ENCODE measurements at regions of chr22 and their contacts with region 1.

Region 1: DNA sequence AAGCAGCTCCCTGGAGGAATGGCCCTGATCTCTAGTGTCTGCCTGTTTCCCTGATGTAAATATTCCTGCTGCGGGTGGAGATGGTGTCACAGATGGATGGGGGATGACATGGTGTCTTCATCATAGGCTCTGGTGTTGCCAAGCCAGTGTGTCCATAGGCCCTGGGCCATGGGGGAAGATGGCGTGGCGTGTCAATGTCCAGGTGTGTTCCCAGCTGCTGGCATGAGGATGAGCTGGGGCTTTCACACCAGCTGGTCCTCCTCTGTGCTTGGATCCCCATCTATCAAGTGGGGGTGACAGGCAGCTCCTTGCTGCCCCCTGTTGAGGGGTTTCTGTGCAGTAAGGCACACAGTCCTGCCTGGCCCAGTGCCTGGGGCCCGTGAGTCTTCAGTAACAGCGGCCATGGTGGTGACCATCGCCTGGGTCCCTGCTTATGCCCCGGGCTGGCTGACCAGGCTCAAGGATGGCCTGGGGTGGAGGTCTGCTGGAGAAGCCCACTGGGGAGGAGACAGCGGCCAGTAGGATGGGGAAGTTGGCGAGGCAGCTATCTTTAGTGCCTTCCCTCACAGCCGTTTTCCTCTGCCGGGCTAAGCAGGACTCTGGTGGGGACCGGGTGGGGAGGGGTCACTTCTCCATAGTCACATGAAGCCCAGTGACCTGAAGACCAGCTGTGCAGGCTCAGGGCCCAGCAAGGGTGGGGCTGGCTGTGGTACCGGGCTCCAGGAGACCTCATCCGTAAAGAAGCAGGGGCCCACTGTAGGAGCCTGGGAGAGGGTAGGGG is 12.7 kb downstream of the RPL3 start:
- DNase-seq: no peak
- ATAC-seq: peak; percentile 39; the same call in 2 of the 3 replicates
- H3K4me3 ChIP-seq: no peak overlapping the region
- H3K27ac ChIP-seq: no peak overlapping the region
- H3K4me1 ChIP-seq: peaks cover 10% of the 10 kb centered on the region
- H3K27me3 ChIP-seq: no peaks in the 10 kb centered on the region
- CTCF ChIP-seq: peak; percentile 55 to 66 (median 57)
- EP300 ChIP-seq: no peak
- POLR2A ChIP-seq: no peak
- RAD21 ChIP-seq: peak; percentile 78

Region 2: GRCh38 chr22:39135090-39135896 is 171.5 kb before region 1 on chr22:
- CTCF ChIA-PET with region 1: interaction called, 10 read pairs
- POLR2A ChIA-PET with region 1: no interaction called
- RAD21 ChIA-PET with region 1: interaction called, 5 read pairs
- SMC1A ChIA-PET with region 1: interaction called, 4 read pairs
- in situ Hi-C with region 1: no loop called
- intact Hi-C with region 1: no loop called
- DNase-seq: no peak
- ATAC-seq: peak; percentile 96
- H3K4me3 ChIP-seq: no peak overlapping the region
- H3K27ac ChIP-seq: no peak overlapping the region
- H3K4me1 ChIP-seq: no peaks in the 10 kb centered on the region
- H3K27me3 ChIP-seq: no peaks in the 10 kb centered on the region
- CTCF ChIP-seq: peak; percentile 63 to 79 (median 68)
- EP300 ChIP-seq: no peak
- POLR2A ChIP-seq: no peak
- RAD21 ChIP-seq: peak; percentile 59

Region 3: DNA sequence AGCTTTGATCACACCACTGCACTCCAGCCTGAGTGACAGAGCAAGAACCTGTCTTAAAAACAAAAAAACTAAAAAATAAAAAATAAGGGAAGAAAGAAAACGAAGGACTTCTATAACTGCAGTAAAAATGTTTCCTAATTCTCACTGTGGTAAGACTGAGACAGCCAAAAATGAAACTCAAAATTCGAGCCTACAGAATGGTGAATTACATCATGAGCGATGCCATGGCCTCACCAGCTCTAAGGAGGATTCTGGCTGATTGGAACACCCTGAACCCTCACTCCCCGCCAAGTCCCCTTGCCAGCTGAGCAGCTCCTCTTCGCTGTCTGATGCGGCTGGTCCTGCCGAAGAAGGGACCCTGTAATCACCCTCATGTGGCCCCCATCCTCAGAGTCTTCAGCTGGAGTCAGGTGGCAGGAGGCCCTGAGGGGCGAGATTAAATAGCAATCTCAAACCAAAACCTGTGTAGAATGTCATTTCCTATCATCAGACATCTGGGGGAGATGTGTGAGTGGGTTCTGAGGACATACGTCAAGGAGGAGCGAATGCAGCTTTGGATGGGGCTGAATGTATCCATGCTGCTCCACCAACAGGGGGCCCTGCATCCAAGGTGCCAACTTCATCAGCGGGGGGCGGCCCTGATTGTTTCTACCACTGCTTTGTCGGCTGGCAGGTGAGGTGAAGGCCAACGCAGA is 91.2 kb before region 1 on chr22:
- CTCF ChIA-PET with region 1: interaction called, 11 read pairs
- POLR2A ChIA-PET with region 1: no interaction called
- RAD21 ChIA-PET with region 1: interaction called, 10 read pairs
- SMC1A ChIA-PET with region 1: interaction called, 5 read pairs
- in situ Hi-C with region 1: no loop called
- intact Hi-C with region 1: loop called (anchors 2 kb)
- DNase-seq: no peak
- ATAC-seq: peak; percentile 80
- H3K4me3 ChIP-seq: no peak overlapping the region
- H3K27ac ChIP-seq: no peak overlapping the region
- H3K4me1 ChIP-seq: no peaks in the 10 kb centered on the region
- H3K27me3 ChIP-seq: no peaks in the 10 kb centered on the region; a peak in 1 of 4 replicates
- CTCF ChIP-seq: peak; percentile 37 to 56 (median 47); a peak in 5 of 6 replicates
- EP300 ChIP-seq: no peak
- POLR2A ChIP-seq: no peak
- RAD21 ChIP-seq: peak; percentile 49

Region 4: DNA sequence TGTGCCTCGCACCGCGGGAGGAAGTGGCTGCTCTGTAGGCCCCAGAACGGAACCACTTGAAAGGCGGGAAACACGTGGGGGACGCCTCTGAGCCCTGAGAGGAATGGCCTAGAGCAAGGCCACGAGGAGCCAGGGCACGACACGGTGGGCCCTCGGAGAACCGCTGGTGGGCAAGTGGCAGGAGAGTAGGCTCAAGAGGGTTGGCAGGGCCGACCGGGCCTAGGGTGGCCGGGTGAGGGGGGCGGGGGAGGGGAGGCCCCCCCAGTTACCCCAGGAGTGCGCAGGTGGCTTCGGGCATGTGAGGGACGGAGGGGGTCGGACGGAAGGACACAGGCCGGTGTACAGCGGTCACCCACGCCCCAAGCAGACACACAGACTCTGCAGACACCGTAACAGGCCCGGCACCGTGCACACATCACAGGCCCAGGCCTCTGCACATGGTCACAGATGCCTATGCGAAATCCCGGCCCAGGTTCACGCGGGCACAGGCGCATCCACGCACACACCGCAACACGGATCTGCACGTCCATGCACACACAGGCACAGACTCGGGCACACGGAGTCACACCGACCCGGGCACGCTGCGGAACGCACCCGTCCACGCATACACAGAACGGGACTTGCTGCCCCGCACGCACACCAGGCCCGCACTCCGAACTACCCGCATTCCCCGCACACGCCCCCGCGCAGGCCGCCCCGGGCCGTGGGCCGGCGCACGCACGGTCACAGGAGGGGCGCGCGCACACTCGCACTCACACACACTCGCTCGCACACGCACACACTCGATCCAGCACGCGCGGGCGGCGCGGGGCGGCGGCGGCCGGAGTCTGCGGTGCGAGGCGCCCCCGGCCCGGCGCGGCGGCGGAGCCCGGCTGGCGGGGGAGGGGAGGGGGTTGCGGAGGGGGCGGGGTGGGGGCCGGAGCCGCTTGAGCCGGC is 149.8 kb after region 1 on chr22 and contains the start of gene MGAT3:
- CTCF ChIA-PET with region 1: no interaction called
- POLR2A ChIA-PET with region 1: no interaction called
- RAD21 ChIA-PET with region 1: no interaction called
- SMC1A ChIA-PET with region 1: no interaction called
- in situ Hi-C with region 1: no loop called
- intact Hi-C with region 1: no loop called
- DNase-seq: no peak
- ATAC-seq: no peak
- H3K4me3 ChIP-seq: peak within 1 kb of the TSS; percentile 86
- H3K27ac ChIP-seq: peak within 1 kb of the TSS; percentile 78
- H3K4me1 ChIP-seq: peaks cover 10% of the 10 kb centered on the region
- H3K27me3 ChIP-seq: no peaks in the 10 kb centered on the region
- CTCF ChIP-seq: no peak
- EP300 ChIP-seq: no peak
- POLR2A ChIP-seq: 0 out of 2 replicates have a peak, but pooled peaks have one; percentile 27
- RAD21 ChIP-seq: no peak
- polyA plus RNA-seq, gene MGAT3: 0.32 to 1.1 TPM